Activated CD4-positive, alpha-beta T cell treated with anti-CD3 and anti-CD28 coated beads, Interleukin-2, amount 10 ng/mL, durations not matched to agents 24 days and 14 days (primary cell): ENCODE measurements at regions of chr10 and their contacts with region 1.

Region 1: GRCh38 chr10:74058658-74059057 is 60.7 kb downstream of the VCL start:
- DNase-seq: peak; percentile 75
- H3K4me3 Mint-ChIP-seq: no peak overlapping the region
- H3K27ac Mint-ChIP-seq: no peak overlapping the region
- H3K4me1 Mint-ChIP-seq: peaks cover 32% of the 10 kb centered on the region
- H3K27me3 Mint-ChIP-seq: no peaks in the 10 kb centered on the region

Region 2: DNA sequence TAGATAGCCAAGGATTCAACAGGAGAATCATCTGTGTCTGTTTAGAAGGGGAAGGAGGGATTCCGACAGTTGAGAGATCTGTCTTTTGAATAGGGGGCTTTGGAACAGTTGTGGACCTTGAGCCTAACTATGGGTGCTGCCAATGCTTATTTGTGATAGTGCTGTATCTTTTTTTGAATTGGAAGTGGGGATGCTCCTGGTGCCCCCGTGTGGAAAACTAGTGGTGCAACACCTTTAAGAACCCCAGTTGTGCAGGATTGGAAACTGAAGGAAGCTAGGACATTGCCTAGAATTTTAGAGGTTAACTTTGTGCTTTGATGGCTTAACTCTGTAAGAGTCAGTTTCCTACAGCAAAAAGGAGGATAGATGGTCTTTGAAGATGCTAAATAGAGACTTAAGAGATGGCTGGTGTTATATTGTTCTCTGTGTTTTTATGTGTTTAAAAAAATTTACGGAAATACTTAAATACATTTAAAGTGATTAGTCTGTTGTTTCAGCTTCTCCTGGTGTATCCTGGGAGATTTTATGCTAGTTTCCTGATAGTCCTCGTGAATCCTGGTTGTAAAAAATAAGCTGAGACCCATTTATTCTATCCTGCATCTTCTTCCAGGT is 22.6 kb after region 1 on chr10:
- intact Hi-C with region 1: loop called (anchors 1 kb)
- DNase-seq: peak; percentile 81
- H3K4me3 Mint-ChIP-seq: no peak overlapping the region
- H3K27ac Mint-ChIP-seq: no peak overlapping the region
- H3K4me1 Mint-ChIP-seq: peaks cover 39% of the 10 kb centered on the region
- H3K27me3 Mint-ChIP-seq: no peaks in the 10 kb centered on the region